ENCODE measurements at regions of chr1 and their contacts with region 1.

Region 1: GRCh38 chr1:230145953-230146476 is 79.0 kb downstream of the GALNT2 start:
- DNase-seq: no peak
- H3K4me3 ChIP-seq: no peak overlapping the region
- H3K27ac ChIP-seq: no peak overlapping the region
- H3K4me1 ChIP-seq: peaks cover 0 to 17% (median 10%) of the 10 kb centered on the region in 4 experiments; a peak in 4 of 7 replicates
- H3K27me3 ChIP-seq: no peaks in the 10 kb centered on the region
- CTCF ChIP-seq: no peak
- EP300 ChIP-seq: no peak
- POLR2A ChIP-seq: no peak
- RAD21 ChIP-seq: no peak

Region 2: GRCh38 chr1:229778683-229779260 is 367.2 kb before region 1 on chr1:
- CTCF ChIA-PET with region 1: no interaction called
- POLR2A ChIA-PET with region 1: no interaction called
- DNase-seq: no peak
- H3K4me3 ChIP-seq: no peak overlapping the region
- H3K27ac ChIP-seq: no peak overlapping the region
- H3K4me1 ChIP-seq: no peaks in the 10 kb centered on the region
- H3K27me3 ChIP-seq: no peaks in the 10 kb centered on the region
- CTCF ChIP-seq: no peak
- EP300 ChIP-seq: no peak
- POLR2A ChIP-seq: no peak
- RAD21 ChIP-seq: no peak

Region 3: GRCh38 chr1:230158415-230159291 is 12.6 kb after region 1 on chr1:
- CTCF ChIA-PET with region 1: interaction called, 10 read pairs
- POLR2A ChIA-PET with region 1: interaction called, 3 read pairs
- DNase-seq: no peak
- H3K4me3 ChIP-seq: no peak overlapping the region
- H3K27ac ChIP-seq: no peak overlapping the region
- H3K4me1 ChIP-seq: peaks cover 0 to 2% (median 0%) of the 10 kb centered on the region in 4 experiments; a peak in 1 of 7 replicates
- H3K27me3 ChIP-seq: no peaks in the 10 kb centered on the region
- CTCF ChIP-seq: no peak
- EP300 ChIP-seq: no peak
- POLR2A ChIP-seq: no peak
- RAD21 ChIP-seq: no peak

Region 4: GRCh38 chr1:230167419-230167852 is 21.4 kb after region 1 on chr1:
- CTCF ChIA-PET with region 1: interaction called, 12 read pairs
- POLR2A ChIA-PET with region 1: no interaction called
- DNase-seq: peak; percentile 23 to 62
- H3K4me3 ChIP-seq: no peak overlapping the region
- H3K27ac ChIP-seq: no peak overlapping the region
- H3K4me1 ChIP-seq: peaks cover 0 to 4% (median 1%) of the 10 kb centered on the region in 4 experiments; a peak in 2 of 7 replicates
- H3K27me3 ChIP-seq: no peaks in the 10 kb centered on the region
- CTCF ChIP-seq: peak; percentile 63 to 90 (median 74)
- EP300 ChIP-seq: no peak
- POLR2A ChIP-seq: no peak
- RAD21 ChIP-seq: peak; percentile 78 to 85